Tibial artery (tissue), 4 donors: ENCODE measurements at regions of chr6 and their contacts with region 1.

Region 1: DNA sequence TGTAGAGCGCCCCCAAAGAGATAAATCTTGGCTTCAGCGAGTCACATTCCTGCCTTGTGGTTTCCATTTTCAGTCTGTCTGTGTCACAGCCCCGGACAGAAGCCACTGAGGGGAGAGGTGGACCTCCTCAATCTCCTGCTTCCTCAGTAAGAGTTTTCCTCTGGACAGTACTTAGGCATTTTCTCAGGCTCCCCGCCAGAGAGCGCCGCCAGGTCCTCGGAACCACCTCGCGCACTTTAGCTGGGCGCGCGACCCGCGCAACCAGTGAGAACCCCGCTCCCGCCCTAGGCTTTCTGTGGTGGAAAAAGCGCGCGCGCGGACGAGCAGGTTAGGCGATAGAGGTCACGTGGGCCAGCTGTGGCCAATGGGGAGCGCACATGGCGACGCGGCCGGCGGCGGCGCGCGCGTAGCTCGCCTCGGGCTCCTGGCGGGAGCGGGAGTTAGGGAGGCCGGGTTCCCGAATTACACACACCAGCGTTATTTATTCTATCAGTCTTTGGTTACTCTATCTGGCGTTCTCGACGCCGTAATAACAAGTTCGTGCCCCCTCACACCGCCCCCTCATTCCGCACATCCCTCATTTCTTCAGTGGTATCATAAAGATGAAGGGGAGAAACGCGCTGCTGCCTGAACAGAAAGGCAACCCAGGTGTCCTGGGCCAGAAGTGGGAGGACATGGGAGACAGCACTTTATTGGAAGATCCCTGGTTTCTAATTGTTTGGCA is 19.4 kb downstream of the PXT1 start:
- DNase-seq: peak; percentile 98
- H3K4me3 ChIP-seq: peak overlapping the region; percentile 54 to 57
- H3K27ac ChIP-seq: peak overlapping the region; percentile 56 to 83
- H3K4me1 ChIP-seq: peaks cover 0 to 14% (median 5%) of the 10 kb centered on the region in 4 donors
- H3K27me3 ChIP-seq: no peaks in the 10 kb centered on the region
- CTCF ChIP-seq: peak; percentile 56 to 60

Region 2: DNA sequence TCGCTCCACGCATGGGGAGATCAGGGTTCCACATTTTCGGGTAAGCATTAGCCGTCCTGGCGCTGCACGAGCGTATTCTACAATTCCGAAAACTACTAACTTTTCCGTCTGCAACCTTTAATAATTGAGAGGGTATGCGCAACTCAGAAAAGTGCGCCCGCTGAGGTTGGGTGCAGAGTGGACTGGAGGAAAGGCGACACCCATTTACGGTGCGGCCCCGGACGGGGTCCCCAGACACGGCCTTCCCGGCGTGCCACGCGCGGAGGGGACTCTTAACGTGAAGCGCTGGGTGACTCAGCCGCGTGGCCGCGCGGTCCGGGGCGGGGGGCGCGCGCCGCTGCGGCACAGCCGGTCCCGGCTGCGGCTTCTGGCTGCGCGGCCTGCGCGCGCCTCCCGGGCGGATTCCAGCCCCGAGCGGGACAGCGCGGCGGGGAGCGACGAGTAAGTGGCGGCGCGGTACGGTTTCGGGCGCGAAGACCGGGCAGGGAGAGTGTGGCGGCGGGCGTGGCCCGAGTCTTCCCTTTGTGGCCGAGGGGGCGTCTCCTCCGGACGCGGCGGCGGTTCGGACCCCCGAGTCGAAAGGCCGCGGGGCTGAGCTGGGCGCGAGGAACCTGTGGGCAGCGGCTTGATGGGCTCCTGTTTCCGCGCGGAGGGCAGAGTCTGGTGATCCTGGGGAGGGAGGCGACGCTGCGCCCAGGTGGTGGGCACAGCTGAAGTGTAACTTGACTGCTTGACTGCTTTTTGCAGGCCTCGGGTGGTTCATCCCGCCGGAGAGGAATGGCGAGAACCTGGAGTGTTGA is 19.6 kb after region 1 on chr6 and contains the starts of genes KCTD20 and PXT1:
- intact Hi-C with region 1: loop called (anchors 2 kb)
- DNase-seq: peak; percentile 82 to 91
- H3K4me3 ChIP-seq: peak within 1 kb of the TSS; percentile 88 to 95
- H3K27ac ChIP-seq: peak within 1 kb of the TSS; percentile 96 to 97
- H3K4me1 ChIP-seq: peaks cover 0 to 53% (median 24%) of the 10 kb centered on the region in 4 donors
- H3K27me3 ChIP-seq: no peaks in the 10 kb centered on the region
- CTCF ChIP-seq: peak in 1 of 2 experiments; percentile 20

Region 3: DNA sequence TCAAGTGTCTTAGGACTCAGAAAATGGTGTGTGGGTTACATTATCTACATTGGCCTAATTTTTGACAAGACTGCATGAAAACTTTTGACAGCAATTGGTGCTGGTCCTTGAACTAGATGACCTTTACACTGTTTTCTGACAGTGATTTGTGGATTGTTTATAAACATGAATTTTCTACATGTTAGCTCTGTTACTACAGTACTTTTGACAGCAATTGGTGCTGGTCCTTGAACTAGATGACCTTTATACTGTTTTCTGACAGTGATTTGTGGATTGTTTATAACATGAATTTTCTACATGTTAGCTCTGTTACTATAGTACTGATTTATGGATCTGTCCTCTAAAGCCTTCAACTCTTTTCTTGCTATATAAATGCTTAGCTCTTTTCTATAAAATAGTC is 36.2 kb after region 1 on chr6:
- intact Hi-C with region 1: loop called (anchors 5 kb)
- DNase-seq: no peak
- H3K4me3 ChIP-seq: no peak overlapping the region
- H3K27ac ChIP-seq: no peak overlapping the region
- H3K4me1 ChIP-seq: peaks cover 0 to 15% (median 8%) of the 10 kb centered on the region in 4 donors
- H3K27me3 ChIP-seq: no peaks in the 10 kb centered on the region
- CTCF ChIP-seq: no peak

Region 4: GRCh38 chr6:36546920-36547645 is 123.8 kb after region 1 on chr6 and contains the start of gene STK38:
- intact Hi-C with region 1: loop called (anchors 10 kb)
- DNase-seq: peak; percentile 86 to 95
- H3K4me3 ChIP-seq: peak within 1 kb of the TSS; percentile 67 to 87
- H3K27ac ChIP-seq: peak within 1 kb of the TSS; percentile 93 to 97
- H3K4me1 ChIP-seq: peaks cover 0 to 34% (median 18%) of the 10 kb centered on the region in 4 donors
- H3K27me3 ChIP-seq: no peaks in the 10 kb centered on the region
- CTCF ChIP-seq: peak in 1 of 2 experiments; percentile 15

Region 5: DNA sequence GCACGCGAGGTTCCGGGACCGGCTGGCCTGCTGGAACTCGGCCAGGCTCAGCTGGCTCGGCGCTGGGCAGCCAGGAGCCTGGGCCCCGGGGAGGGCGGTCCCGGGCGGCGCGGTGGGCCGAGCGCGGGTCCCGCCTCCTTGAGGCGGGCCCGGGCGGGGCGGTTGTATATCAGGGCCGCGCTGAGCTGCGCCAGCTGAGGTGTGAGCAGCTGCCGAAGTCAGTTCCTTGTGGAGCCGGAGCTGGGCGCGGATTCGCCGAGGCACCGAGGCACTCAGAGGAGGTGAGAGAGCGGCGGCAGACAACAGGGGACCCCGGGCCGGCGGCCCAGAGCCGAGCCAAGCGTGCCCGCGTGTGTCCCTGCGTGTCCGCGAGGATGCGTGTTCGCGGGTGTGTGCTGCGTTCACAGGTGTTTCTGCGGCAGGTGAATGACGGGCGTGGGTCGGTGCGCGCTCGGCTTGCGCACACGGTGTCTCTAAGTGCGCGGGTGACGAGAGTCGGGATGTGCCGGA is 255.3 kb after region 1 on chr6 and contains the start of gene CDKN1A:
- intact Hi-C with region 1: loop called (anchors 5 kb)
- DNase-seq: peak; percentile 93 to 98
- H3K4me3 ChIP-seq: peak within 1 kb of the TSS; percentile 95 to 99
- H3K27ac ChIP-seq: peak within 1 kb of the TSS; percentile 99 to 100
- H3K4me1 ChIP-seq: peaks cover 0 to 55% (median 41%) of the 10 kb centered on the region in 4 donors
- H3K27me3 ChIP-seq: no peaks in the 10 kb centered on the region
- CTCF ChIP-seq: peak in 1 of 2 experiments; percentile 31

Region 6: GRCh38 chr6:36692220-36692619 is 269.0 kb after region 1 on chr6:
- intact Hi-C with region 1: no loop called
- DNase-seq: no peak
- H3K4me3 ChIP-seq: no peak overlapping the region
- H3K27ac ChIP-seq: peak overlapping the region in 1 of 2 donors; percentile 47
- H3K4me1 ChIP-seq: peaks cover 0 to 13% (median 9%) of the 10 kb centered on the region in 4 donors
- H3K27me3 ChIP-seq: no peaks in the 10 kb centered on the region
- CTCF ChIP-seq: no peak